SK-N-SH (cell line): ENCODE measurements at regions of chr1 and their contacts with region 1.

Region 1: DNA sequence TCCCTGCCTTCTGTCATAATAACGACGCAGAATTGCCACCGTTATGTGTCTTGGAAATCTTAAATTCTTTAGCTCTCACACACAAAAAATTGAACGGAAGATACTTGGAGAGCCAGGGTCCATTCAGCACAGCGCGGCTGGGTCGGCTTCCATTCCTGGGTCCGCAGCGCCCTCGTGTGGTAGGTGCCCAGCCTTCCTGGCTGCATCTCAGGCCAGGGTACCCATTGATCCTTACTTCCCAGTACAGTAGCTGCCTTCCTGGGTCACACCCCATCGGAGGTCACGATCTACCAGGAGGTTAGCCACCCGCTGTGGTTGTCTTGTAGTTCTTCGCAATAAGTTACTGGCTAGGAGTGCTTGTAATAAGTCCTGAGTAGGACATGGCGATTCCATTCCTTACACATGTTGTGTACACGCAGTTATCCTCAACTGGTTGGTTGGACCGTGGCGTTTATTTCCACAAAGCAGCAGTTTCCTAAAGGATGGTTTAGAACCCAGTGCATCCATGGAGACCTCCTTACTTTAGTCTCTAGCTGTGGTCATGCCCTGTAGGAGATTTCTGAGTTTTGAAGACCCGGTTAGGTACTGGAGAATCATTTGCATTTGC is 9.9 kb upstream of the MTARC1 start:
- DNase-seq: peak; percentile 84
- H3K4me3 ChIP-seq: peak overlapping the region in 1 of 2 experiments; percentile 41; a peak in 1 of 4 replicates
- H3K27ac ChIP-seq: no peak overlapping the region
- H3K4me1 ChIP-seq: no peaks in the 10 kb centered on the region
- H3K27me3 ChIP-seq: no peaks in the 10 kb centered on the region
- CTCF ChIP-seq: peak; percentile 97
- EP300 ChIP-seq: no peak
- RAD21 ChIP-seq: peak; percentile 96

Region 2: DNA sequence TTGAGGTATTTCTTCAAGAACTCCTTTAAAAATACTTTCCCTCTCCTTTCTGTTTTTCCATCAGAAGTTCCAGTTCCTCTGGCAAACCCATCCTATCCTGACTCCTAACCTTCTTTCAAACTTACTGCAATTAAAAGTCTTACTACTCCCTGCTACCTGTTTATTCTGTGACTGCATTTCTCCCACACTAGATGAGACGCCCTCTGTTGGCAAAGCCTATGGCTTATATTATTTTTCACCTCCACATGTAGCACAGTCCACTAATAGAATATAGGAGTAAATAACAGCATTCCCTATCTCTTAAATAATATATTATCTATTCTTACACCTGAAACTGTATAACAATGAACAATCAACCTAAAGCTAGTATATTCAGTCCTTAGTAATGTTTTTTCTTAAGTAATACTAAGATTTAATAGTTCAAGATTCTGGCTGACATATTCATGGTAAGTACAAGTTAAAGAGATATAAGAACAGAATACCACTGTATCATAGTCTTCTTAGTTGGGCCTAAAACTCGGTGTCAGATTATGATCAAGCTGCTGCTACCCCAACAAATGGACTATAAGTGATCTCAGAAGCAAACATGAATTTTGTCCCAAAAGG is 559.3 kb before region 1 on chr1:
- CTCF ChIA-PET with region 1: interaction called, 31 read pairs
- POLR2A ChIA-PET with region 1: no interaction called
- DNase-seq: no peak
- H3K4me3 ChIP-seq: no peak overlapping the region
- H3K27ac ChIP-seq: no peak overlapping the region
- H3K4me1 ChIP-seq: no peaks in the 10 kb centered on the region; a peak in 1 of 4 replicates
- H3K27me3 ChIP-seq: no peaks in the 10 kb centered on the region
- CTCF ChIP-seq: peak; percentile 49
- EP300 ChIP-seq: no peak
- RAD21 ChIP-seq: no peak

Region 3: DNA sequence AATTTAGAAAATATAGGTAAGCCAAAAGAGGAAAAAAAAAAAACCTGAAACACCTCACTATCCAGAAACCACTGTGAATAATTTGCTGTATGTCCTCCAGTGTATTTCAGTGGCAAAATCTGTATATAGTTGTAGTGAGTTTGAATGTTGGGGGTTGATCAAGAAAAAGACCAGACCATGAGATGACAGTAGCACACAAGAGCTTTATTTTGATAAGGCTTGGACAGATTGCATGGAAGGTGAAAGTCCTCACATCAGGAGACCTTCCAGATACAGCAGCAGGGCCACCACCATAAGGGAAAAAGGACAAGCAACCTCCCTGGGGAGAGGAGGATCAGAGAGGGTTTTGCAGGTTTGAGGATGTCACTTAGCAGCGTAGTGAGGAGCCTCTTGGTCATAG is 102.9 kb before region 1 on chr1:
- CTCF ChIA-PET with region 1: interaction called, 12 read pairs
- POLR2A ChIA-PET with region 1: no interaction called
- DNase-seq: no peak
- H3K4me3 ChIP-seq: no peak overlapping the region
- H3K27ac ChIP-seq: no peak overlapping the region
- H3K4me1 ChIP-seq: no peaks in the 10 kb centered on the region
- H3K27me3 ChIP-seq: no peaks in the 10 kb centered on the region
- CTCF ChIP-seq: no peak
- EP300 ChIP-seq: no peak
- RAD21 ChIP-seq: no peak

Region 4: DNA sequence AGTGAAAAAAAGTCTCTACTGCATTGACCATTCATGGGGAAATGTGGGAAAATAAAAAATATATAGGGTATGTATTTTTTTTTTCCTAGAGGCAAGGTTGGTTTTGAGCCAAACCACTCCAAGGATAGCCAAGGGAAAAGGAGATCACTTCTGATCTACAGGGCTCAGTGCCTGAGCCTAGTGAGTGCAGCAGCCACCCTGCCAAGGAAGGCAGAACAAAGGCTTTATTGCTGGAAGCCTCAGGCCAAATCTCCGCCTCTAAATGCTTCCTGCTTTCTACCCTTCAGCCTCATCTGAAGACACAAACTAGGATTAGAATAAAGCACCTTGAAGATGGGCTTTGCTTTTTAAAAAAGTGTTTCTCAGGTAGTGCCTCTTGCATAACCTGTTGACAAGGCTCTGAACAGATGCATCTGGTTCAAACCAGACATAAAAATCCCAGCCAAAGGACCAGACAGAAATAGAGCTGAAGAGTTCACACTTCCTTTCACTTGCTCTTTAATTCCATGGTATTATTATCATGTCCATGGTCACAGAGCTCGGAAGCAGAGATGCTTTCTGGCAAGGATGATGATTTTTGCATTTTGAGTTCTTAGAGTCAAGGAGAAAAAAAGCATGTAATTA is 76.2 kb before region 1 on chr1:
- CTCF ChIA-PET with region 1: interaction called, 16 read pairs
- POLR2A ChIA-PET with region 1: no interaction called
- DNase-seq: no peak
- H3K4me3 ChIP-seq: no peak overlapping the region
- H3K27ac ChIP-seq: no peak overlapping the region
- H3K4me1 ChIP-seq: no peaks in the 10 kb centered on the region; a peak in 1 of 4 replicates
- H3K27me3 ChIP-seq: no peaks in the 10 kb centered on the region
- CTCF ChIP-seq: no peak
- EP300 ChIP-seq: no peak
- RAD21 ChIP-seq: no peak

Region 5: DNA sequence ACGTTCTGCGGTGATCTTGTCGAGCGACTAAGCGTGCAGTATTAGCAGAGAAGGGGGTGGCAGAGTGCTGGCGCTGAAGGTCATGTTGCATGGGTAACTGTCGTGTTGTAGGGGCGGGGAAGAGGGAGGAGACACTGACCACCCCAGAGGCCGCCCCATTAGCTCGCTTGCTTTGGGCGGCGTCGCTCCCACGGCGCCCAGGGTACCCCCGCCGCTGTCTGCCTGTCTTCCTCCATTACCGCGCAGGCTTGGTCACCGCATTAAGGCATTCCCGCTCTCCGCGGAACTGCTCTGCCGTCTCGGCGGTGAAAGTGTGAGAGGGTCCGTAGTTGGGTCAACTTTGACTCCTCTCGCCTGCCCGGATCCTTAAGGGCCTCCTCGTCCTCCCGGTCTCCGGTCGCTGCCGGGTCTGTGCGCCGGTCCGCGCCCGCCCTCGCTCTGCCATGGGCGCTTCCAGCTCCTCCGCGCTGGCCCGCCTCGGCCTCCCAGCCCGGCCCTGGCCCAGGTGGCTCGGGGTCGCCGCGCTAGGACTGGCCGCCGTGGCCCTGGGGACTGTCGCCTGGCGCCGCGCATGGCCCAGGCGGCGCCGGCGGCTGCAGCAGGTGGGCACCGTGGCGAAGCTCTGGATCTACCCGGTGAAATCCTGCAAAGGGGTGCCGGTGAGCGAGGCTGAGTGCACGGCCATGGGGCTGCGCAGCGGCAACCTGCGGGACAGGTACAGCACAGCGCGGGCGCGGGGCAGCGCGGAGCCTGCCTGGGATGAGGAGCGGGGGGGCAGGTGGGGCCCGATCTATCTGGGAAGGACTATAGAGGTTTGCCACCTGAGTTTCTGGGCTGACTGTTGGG is 28.5 kb before region 1 on chr1 and contains the start of gene MTARC2:
- CTCF ChIA-PET with region 1: interaction called, 54 read pairs
- POLR2A ChIA-PET with region 1: no interaction called
- DNase-seq: peak; percentile 90
- H3K4me3 ChIP-seq: peak within 1 kb of the TSS; percentile 76 to 81
- H3K27ac ChIP-seq: peak within 1 kb of the TSS; percentile 43 to 78; a peak in 3 of 4 replicates
- H3K4me1 ChIP-seq: peaks cover 5 to 16% of the 10 kb centered on the region in 2 experiments; a peak in 1 of 4 replicates
- H3K27me3 ChIP-seq: no peaks in the 10 kb centered on the region
- CTCF ChIP-seq: no peak
- EP300 ChIP-seq: 0 out of 4 replicates have a peak, but pooled peaks of 1 of the 2 experiments have one; percentile 5
- RAD21 ChIP-seq: 0 out of 2 replicates have a peak, but pooled peaks have one; percentile 2
- polyA plus RNA-seq, gene MTARC2: 6.0 and 6.1 TPM in 2 replicates

Region 6: GRCh38 chr1:220902916-220903315 is 126.1 kb after region 1 on chr1:
- CTCF ChIA-PET with region 1: no interaction called
- POLR2A ChIA-PET with region 1: no interaction called
- DNase-seq: no peak
- H3K4me3 ChIP-seq: no peak overlapping the region
- H3K27ac ChIP-seq: no peak overlapping the region
- H3K4me1 ChIP-seq: peaks cover 0 to 8% of the 10 kb centered on the region in 2 experiments; a peak in 1 of 4 replicates
- H3K27me3 ChIP-seq: no peaks in the 10 kb centered on the region
- CTCF ChIP-seq: no peak
- EP300 ChIP-seq: no peak
- RAD21 ChIP-seq: no peak

Region 7: GRCh38 chr1:221074301-221074700 is 297.5 kb after region 1 on chr1:
- CTCF ChIA-PET with region 1: no interaction called
- POLR2A ChIA-PET with region 1: no interaction called
- DNase-seq: no peak
- H3K4me3 ChIP-seq: no peak overlapping the region
- H3K27ac ChIP-seq: no peak overlapping the region
- H3K4me1 ChIP-seq: peaks cover 0 to 5% of the 10 kb centered on the region in 2 experiments; a peak in 1 of 4 replicates
- H3K27me3 ChIP-seq: no peaks in the 10 kb centered on the region
- CTCF ChIP-seq: no peak
- EP300 ChIP-seq: no peak
- RAD21 ChIP-seq: no peak